HEK293T (cell line): ENCODE measurements at regions of chr3 and their contacts with region 1.

Region 1: DNA sequence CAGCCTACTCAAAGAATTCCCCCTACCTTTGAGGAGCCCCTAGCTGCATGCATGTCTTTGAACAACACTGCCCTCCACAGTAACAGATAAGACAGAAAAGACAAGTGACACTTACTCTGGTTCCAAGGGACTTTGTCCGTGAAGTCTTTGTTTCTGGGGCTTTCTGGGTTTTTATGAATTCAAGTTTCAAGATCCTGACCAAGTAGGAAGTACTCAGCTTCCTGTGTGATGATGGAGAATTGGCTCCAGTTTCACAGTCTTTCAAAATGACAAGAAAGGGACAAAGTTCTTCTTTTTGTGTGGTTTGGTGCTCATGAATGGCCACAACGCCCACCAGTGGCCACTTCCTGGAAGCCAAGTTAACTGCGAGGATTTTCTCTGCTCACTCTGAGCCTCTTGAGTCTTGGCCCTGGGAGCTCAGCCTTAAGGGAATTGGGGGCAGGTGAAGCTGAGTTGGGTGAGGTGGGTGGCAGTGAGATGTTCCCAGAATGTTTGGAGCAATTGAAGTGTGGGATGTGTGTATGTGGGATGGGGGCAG is at the start of gene CCR1:
- DNase-seq: peak; percentile 38

Region 2: DNA sequence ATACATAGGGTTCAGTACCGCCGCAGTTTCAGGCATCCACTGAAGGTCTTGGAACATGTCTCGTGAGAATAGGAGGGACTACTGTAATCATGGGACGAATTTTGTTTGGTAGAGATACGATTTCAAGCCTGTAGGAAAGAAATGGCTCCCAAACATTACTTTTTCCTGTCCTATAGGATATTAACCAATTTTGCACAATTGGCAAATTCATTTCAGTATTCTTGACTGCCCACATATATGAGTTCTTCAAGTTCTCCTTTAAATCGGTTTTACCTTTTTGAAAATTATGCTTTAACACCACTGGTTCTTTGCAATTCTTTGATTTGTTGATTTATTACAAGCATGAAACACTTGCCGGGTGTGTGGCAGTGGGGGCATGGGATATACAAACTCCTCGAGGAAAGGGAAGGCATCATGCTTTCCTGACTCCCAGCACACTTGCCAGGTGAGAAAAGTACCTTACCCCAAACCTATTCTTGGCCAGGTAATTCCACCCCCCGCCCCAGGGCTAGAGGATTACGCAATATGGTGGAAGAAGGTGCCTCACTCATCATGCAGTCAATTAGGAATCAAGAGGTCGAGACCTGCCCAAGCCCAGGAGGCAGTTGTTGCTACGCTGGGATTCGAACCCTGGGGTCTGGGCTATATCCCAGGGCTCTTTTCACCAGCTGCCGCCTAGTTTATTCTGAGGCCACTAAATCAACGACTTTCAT is 820.4 kb before region 1 on chr3:
- CTCF ChIA-PET with region 1: interaction called, 10 read pairs
- POLR2A ChIA-PET with region 1: no interaction called
- DNase-seq: no peak